ENCODE measurements at regions of chr16 and their contacts with region 1.

Region 1: DNA sequence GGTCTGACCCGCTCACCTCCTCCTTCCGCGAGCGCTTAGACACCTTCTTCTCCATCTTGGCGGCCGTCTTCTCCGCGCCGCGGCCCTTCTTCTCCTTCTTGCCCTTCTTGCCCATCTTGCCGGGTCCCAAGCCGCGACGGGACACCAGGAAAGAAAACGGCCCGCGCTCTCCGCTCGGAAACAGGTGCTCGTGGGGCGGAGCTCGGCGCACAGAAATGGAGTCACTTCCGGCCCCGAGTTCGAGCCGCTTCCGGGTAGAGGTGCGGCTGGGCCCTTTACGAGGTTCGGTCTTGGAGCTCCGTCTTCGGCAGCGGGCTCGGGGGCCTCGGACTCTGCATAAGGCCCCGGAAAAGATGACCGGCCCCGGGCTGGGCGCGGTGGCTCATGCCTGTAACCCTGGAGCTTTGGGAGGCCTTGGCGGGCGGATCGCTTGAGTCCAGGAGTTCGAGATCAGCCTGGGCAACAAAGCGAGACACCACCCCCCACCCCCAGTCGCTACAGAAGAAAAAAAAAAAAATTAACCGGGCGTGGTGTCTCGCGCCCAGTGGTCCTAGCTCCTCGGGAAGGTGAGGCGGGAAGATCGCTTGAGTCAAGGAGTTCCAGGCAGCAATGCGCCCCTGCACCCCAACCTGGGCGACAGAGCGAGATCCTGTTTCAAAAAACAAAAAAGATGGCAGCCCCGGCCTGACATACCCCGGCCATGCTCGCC is at the start of gene KLHDC4:
- DNase-seq: peak; percentile 92
- ATAC-seq: peak; percentile 96
- total RNA-seq, gene KLHDC4: 11.4 to 18.0 TPM

Region 2: DNA sequence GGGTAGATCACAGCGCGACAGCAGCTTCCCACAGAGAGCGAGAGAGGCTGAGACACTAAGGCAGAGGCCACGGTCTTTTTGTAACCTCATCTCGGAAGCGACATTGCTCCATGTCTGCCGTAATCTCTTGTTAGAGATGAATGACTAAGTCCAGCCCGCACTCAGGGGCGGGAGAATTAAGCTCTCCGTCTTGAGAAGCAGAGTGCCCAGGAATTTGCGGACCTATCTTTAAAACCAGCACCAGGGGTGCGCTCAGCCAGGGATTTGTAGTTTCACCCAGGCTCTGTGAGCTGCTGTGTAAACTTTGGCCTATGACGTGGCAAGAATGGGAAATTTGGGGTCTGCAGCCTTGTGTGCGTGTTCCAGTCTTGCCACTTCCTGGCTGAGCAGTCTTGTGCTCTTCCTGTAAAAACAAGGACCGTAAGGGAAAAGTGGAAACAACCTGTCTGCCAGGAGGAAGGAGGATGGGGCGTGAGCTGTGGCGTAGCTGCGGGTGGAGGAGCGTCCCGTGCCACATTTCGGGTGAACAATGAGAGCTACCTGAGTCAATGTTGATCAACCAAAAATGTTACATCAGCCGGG is 179.6 kb before region 1 on chr16:
- intact Hi-C with region 1: loop called (anchors 2 to 5 kb)
- DNase-seq: no peak
- ATAC-seq: no peak

Region 3: DNA sequence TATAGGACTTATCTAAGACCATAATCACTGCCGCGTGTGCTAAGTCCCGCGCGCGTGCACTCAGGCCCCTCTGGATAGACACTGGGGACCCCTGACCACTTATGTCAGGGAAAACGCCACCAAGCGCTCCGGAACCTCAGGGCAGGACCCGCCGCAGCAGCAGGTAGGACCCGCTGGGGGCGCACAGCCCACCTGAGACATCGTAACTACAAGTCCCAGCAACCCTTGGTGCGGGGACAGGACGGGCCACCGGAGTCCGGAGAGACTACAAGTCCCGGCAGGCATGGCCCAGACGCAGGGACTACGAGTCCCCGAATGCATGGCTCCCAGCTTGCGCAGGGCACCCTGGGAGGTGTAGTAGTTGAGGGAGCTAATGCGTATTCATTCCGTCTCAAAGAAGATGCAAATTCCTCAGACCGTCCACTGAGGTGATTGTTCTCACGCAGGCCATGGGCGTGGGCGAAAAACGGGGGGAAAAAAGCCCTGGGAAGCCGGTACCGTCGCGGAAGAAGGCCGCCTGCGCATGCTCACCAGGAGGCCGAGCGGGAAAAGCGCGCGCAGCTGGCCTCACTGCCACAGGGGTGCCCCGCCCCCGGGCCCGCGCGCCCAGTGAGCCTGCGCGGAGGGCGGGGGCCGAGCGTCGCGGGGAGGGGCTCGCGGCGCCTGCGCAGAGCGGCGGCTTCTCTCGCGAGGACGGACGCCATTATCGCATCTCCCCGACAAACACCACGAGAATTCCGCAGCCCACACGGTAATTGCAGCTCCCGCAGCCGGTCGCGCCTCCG is 185.0 kb after region 1 on chr16 and contains the start of gene BANP:
- intact Hi-C with region 1: no loop called
- DNase-seq: peak; percentile 99
- ATAC-seq: peak; percentile 96 to 97
- total RNA-seq, gene BANP: 13.9 to 16.7 TPM

Region 4: DNA sequence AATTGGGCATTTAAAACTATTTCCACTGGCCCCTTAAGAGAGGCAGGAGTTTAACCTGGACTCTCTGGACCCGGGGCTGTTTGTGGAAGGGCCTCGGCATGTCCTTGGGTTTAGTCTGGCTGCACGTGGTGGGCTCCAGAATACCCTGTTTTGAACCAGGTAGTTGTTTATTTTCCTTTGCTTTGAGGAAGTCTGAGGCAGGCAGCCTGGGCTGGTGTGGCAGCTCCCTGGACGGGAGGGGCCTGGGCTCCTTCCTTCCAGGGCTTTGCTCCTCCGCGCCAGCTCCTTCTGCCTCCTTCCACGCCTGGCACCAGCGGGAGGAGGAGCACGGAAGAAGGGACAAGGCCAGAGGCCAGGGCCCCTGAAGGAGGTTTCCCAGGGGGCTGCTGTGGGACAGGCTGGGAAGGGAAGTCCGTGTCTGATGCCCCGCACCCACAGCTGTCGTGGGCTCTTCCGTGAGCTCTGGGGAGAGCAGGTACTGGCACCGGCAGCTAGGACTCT is 200.8 kb after region 1 on chr16:
- intact Hi-C with region 1: no loop called
- DNase-seq: no peak
- ATAC-seq: peak; percentile 67 to 80